Ascending aorta (tissue), 2 donors: ENCODE measurements at regions of chr20 and their contacts with region 1.

Region 1: DNA sequence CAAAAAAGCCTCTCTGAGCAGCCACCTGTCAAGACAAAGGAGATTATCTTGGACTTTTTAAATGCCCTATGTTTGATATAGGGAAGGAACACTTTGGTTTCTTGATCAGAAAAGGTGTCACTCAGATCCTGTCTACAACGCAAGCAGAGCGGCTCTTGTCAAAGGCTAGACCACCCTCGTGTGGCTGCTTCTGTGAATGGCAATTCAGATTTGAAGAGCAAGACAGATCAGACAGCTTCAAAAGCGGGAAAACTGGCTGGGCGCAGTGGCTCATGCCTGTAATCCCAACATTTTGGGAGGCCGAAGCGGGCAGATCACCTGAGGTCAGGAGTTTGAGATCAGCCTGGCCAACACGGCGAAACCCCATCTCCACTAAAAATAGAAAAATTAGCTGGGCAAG is 10.1 kb upstream of the NXT1 start:
- DNase-seq: peak in 1 of 2 donors; percentile 88
- H3K4me3 ChIP-seq: no peak overlapping the region
- H3K27ac ChIP-seq: no peak overlapping the region
- H3K4me1 ChIP-seq: no peaks in the 10 kb centered on the region
- H3K27me3 ChIP-seq: no peaks in the 10 kb centered on the region
- CTCF ChIP-seq: peak; percentile 66 to 79 (median 76)

Region 2: GRCh38 chr20:22691369-22692118 is 649.0 kb before region 1 on chr20:
- intact Hi-C with region 1: loop called (anchors 1 kb)
- DNase-seq: peak in 1 of 2 donors; percentile 88
- H3K4me3 ChIP-seq: peak overlapping the region in 1 of 2 donors; percentile 28
- H3K27ac ChIP-seq: no peak overlapping the region
- H3K4me1 ChIP-seq: peaks cover 0 to 6% of the 10 kb centered on the region in 2 donors
- H3K27me3 ChIP-seq: no peaks in the 10 kb centered on the region
- CTCF ChIP-seq: peak; percentile 82 to 91 (median 85)

Region 3: GRCh38 chr20:23245553-23246181 is 94.9 kb before region 1 on chr20:
- intact Hi-C with region 1: loop called (anchors 5 kb)
- DNase-seq: peak in 1 of 2 donors; percentile 76
- H3K4me3 ChIP-seq: no peak overlapping the region
- H3K27ac ChIP-seq: peak overlapping the region in 1 of 2 donors; percentile 37
- H3K4me1 ChIP-seq: peaks cover 0 to 5% of the 10 kb centered on the region in 2 donors
- H3K27me3 ChIP-seq: no peaks in the 10 kb centered on the region
- CTCF ChIP-seq: peak in 2 of 3 experiments; percentile 19 to 41